Activated CD4-positive, alpha-beta T cell treated with anti-CD3 and anti-CD28 coated beads for 36 hours (primary cell): ENCODE measurements at regions of chr16 and their contacts with region 1.

Region 1: GRCh38 chr16:12754824-12755543 is 48.7 kb downstream of the CPPED1 start:
- DNase-seq: no peak
- ATAC-seq: no peak
- H3K4me3 Mint-ChIP-seq: no peak overlapping the region
- H3K27ac Mint-ChIP-seq: no peak overlapping the region
- H3K4me1 Mint-ChIP-seq: peaks cover 23% of the 10 kb centered on the region
- H3K27me3 Mint-ChIP-seq: no peaks in the 10 kb centered on the region

Region 2: DNA sequence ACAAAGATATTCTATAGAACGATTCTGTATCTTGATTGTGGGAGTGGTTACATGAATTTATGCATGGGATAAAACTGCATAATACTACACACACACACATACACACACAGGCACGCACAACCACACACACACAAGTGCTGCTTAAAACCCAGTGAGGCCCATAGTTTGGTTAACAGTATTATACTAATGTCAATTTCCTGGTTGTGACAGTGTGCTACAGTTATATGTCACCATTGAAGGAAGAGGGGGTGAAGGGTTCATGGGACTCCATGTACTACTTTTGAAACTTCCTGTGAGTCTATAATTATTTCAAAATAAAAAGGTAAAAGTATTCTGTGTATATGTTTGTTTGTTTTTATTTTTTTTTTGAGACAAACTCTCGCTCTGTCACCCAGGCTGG is 966.1 kb before region 1 on chr16:
- CTCF ChIA-PET with region 1: no interaction called
- POLR2A ChIA-PET with region 1: no interaction called
- intact Hi-C with region 1: loop called in 1 of 2 experiments (anchors 5 kb)
- DNase-seq: no peak
- ATAC-seq: peak; percentile 47
- H3K4me3 Mint-ChIP-seq: no peak overlapping the region
- H3K27ac Mint-ChIP-seq: peak overlapping the region; percentile 68
- H3K4me1 Mint-ChIP-seq: peaks cover 84% of the 10 kb centered on the region
- H3K27me3 Mint-ChIP-seq: no peaks in the 10 kb centered on the region

Region 3: GRCh38 chr16:12590963-12591362 is 164.0 kb before region 1 on chr16:
- CTCF ChIA-PET with region 1: interaction called, 3 read pairs
- POLR2A ChIA-PET with region 1: no interaction called
- intact Hi-C with region 1: loop called in 1 of 2 experiments (anchors 1 kb)
- DNase-seq: no peak
- ATAC-seq: peak; percentile 88
- H3K4me3 Mint-ChIP-seq: no peak overlapping the region
- H3K27ac Mint-ChIP-seq: peak overlapping the region; percentile 72
- H3K4me1 Mint-ChIP-seq: peaks cover 15% of the 10 kb centered on the region
- H3K27me3 Mint-ChIP-seq: peaks cover 18% of the 10 kb centered on the region

Region 4: GRCh38 chr16:12646490-12647274 is 108.3 kb before region 1 on chr16:
- CTCF ChIA-PET with region 1: no interaction called
- POLR2A ChIA-PET with region 1: no interaction called
- intact Hi-C with region 1: loop called (anchors 1 to 5 kb)
- DNase-seq: peak; percentile 56
- ATAC-seq: peak; percentile 79
- H3K4me3 Mint-ChIP-seq: peak overlapping the region; percentile 37
- H3K27ac Mint-ChIP-seq: peak overlapping the region; percentile 92
- H3K4me1 Mint-ChIP-seq: peaks cover 22% of the 10 kb centered on the region
- H3K27me3 Mint-ChIP-seq: peaks cover 4% of the 10 kb centered on the region

Region 5: DNA sequence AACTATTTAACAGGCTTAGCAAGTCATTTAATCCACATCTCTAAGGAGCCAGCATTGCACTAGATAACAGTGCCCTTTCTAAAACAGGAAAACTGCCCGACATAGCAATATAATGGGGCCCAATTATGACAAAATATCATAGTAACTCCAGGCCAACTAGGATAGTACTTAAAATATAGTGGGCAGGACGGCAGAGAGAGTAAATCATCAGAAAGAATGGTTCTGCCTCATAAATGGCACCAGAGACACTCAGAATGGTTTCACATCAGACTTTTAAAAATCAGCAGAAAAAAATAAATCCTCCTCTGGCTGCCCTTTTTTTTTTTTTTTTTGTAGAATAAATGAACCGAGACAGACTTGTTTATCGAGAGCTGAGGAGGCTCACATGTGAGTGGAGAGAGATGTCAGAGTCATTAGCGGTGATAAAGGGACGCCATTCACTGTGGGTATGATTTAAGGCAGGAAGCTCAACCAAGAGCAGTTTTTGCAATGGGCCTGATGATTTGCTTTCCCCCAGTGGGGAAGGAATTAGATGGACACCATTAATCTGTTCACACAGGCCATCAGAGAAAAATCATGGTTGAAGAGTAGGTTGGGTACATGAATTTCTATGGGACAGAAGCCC is 13.9 kb before region 1 on chr16:
- CTCF ChIA-PET with region 1: no interaction called
- POLR2A ChIA-PET with region 1: no interaction called
- intact Hi-C with region 1: no loop called
- DNase-seq: no peak
- ATAC-seq: no peak
- H3K4me3 Mint-ChIP-seq: no peak overlapping the region
- H3K27ac Mint-ChIP-seq: no peak overlapping the region
- H3K4me1 Mint-ChIP-seq: no peaks in the 10 kb centered on the region
- H3K27me3 Mint-ChIP-seq: no peaks in the 10 kb centered on the region

Region 6: GRCh38 chr16:12781777-12782176 is 26.8 kb after region 1 on chr16:
- CTCF ChIA-PET with region 1: no interaction called
- POLR2A ChIA-PET with region 1: no interaction called
- intact Hi-C with region 1: loop called in 1 of 2 experiments (anchors 1 kb)
- DNase-seq: peak; percentile 58
- ATAC-seq: peak; percentile 91
- H3K4me3 Mint-ChIP-seq: no peak overlapping the region
- H3K27ac Mint-ChIP-seq: peak overlapping the region; percentile 31
- H3K4me1 Mint-ChIP-seq: peaks cover 7% of the 10 kb centered on the region
- H3K27me3 Mint-ChIP-seq: no peaks in the 10 kb centered on the region